Right cardiac atrium (tissue), 5 donors: ENCODE measurements at regions of chr9 and their contacts with region 1.

Region 1: DNA sequence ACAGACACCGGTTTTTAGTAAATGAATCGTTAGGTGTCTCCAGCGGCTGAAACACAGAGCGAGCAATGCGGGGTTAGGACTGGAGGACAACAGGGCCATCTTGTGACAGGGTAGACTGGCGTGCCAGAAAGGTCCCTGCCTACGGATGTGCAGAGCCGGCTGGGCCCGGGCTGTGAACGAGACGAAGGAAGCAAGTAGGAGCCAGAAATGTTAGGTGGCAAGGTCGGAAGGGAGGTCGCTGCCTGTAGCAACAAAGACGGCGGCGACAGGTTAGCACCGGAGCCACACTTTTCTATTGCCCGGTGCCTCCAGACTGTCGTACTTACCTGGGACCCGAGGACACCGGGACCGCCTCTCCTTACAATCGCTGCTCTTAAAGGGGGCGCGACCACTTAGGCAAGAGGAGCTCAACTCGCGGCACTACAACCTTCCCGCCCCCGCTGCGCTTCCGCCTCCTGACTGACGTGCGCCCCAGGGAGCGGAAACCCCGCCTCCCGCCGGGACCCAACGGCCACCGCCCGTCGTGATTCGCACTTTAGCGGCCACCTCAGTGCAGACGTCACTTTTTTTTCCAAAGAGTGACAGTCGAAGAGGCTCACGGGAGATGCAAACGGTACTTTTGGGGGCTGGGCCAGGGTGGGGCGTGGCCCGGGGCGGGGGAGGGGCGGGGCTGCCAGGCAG is at the start of gene INIP:
- DNase-seq: peak; percentile 97 to 98 (median 98)
- ATAC-seq: peak; percentile 99
- H3K4me3 ChIP-seq: peak within 1 kb of the TSS; percentile 73
- H3K27ac ChIP-seq: peak within 1 kb of the TSS; percentile 87
- H3K4me1 ChIP-seq: no peaks in the 10 kb centered on the region
- H3K27me3 ChIP-seq: no peaks in the 10 kb centered on the region
- total RNA-seq, gene INIP: 11.5 to 19.2 (median 15.9) TPM

Region 2: DNA sequence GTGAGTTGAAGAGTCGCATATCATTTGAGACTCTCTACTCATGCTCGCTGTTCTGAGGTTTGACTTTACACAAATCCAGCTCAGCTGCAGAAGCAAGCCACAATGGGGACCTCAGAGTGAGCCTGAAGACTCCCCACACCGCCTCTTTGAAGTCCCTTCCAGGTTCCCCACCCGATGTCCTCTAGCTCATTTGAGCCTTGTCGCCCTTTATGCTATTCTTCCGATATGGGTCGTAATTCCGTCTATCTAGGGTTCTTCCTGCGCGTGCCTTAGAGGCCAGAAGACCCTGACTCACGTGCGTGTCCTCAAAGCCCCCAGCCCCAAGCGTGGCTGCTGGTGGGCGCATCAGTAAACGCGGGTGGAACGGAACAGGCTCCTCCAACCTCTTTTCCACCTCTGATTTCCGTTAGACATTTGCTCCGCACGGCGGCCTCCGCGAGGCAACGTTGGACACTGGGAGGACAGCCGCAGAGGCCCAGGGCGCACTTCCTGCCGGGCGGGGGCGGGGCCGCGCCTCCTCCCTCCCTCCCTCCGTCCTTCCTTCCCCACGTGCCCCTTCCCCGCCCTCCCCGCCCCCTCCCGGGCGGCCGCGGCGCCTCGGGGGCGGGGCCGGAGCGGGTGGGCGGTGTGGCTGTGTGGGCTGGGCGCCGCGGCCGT is 32.4 kb after region 1 on chr9 and contains the start of gene SNX30:
- intact Hi-C with region 1: loop called in 1 of 4 experiments (anchors 5 kb)
- DNase-seq: peak; percentile 92 to 97 (median 96)
- ATAC-seq: peak; percentile 97
- H3K4me3 ChIP-seq: peak within 1 kb of the TSS; percentile 90
- H3K27ac ChIP-seq: peak within 1 kb of the TSS; percentile 69
- H3K4me1 ChIP-seq: peaks cover 5% of the 10 kb centered on the region
- H3K27me3 ChIP-seq: no peaks in the 10 kb centered on the region
- total RNA-seq, gene SNX30: 3.9 to 4.7 (median 4.6) TPM